Calu3 (cell line): ENCODE measurements at regions of chrX and their contacts with region 1.

Region 1: GRCh38 chrX:25144043-25144940 is 128.5 kb upstream of the ARX start:
- DNase-seq: peak; percentile 57
- H3K4me3 Mint-ChIP-seq: no peak overlapping the region
- H3K27ac Mint-ChIP-seq: no peak overlapping the region
- H3K4me1 Mint-ChIP-seq: no peaks in the 10 kb centered on the region
- H3K27me3 Mint-ChIP-seq: peaks cover 12% of the 10 kb centered on the region
- CTCF ChIP-seq: peak; percentile 58

Region 2: GRCh38 chrX:23952984-23953907 is 1191.0 kb before region 1 on chrX:
- CTCF ChIA-PET with region 1: no interaction called
- intact Hi-C with region 1: no loop called
- DNase-seq: peak; percentile 1
- H3K4me3 Mint-ChIP-seq: peak overlapping the region; percentile 45
- H3K27ac Mint-ChIP-seq: peak overlapping the region; percentile 77
- H3K4me1 Mint-ChIP-seq: peaks cover 11% of the 10 kb centered on the region
- H3K27me3 Mint-ChIP-seq: no peaks in the 10 kb centered on the region
- CTCF ChIP-seq: no peak

Region 3: GRCh38 chrX:24759786-24760185 is 384.5 kb before region 1 on chrX:
- CTCF ChIA-PET with region 1: no interaction called
- intact Hi-C with region 1: loop called (anchors 5 kb)
- DNase-seq: no peak
- H3K4me3 Mint-ChIP-seq: no peak overlapping the region
- H3K27ac Mint-ChIP-seq: no peak overlapping the region
- H3K4me1 Mint-ChIP-seq: no peaks in the 10 kb centered on the region
- H3K27me3 Mint-ChIP-seq: no peaks in the 10 kb centered on the region
- CTCF ChIP-seq: no peak

Region 4: GRCh38 chrX:25034889-25035288 is 109.4 kb before region 1 on chrX:
- CTCF ChIA-PET with region 1: no interaction called
- intact Hi-C with region 1: loop called (anchors 2 kb)
- DNase-seq: no peak
- H3K4me3 Mint-ChIP-seq: no peak overlapping the region
- H3K27ac Mint-ChIP-seq: no peak overlapping the region
- H3K4me1 Mint-ChIP-seq: no peaks in the 10 kb centered on the region
- H3K27me3 Mint-ChIP-seq: peaks cover 15% of the 10 kb centered on the region
- CTCF ChIP-seq: no peak

Region 5: GRCh38 chrX:25191403-25191802 is 47.1 kb after region 1 on chrX:
- CTCF ChIA-PET with region 1: no interaction called
- intact Hi-C with region 1: no loop called
- DNase-seq: no peak
- H3K4me3 Mint-ChIP-seq: no peak overlapping the region
- H3K27ac Mint-ChIP-seq: no peak overlapping the region
- H3K4me1 Mint-ChIP-seq: no peaks in the 10 kb centered on the region
- H3K27me3 Mint-ChIP-seq: peaks cover 18% of the 10 kb centered on the region
- CTCF ChIP-seq: peak; percentile 23